Heart left ventricle (tissue), 16 donors: ENCODE measurements at regions of chr6 and their contacts with region 1.

Region 1: GRCh38 chr6:79777713-79778579 is 146.8 kb downstream of the SH3BGRL2 start:
- DNase-seq: peak; percentile 69 to 87 (median 74)
- ATAC-seq: peak; percentile 78 to 94 (median 92)
- H3K4me3 ChIP-seq: peak overlapping the region in 11 of 12 donors; percentile 0 to 53 (median 37)
- H3K27ac ChIP-seq: peak overlapping the region in 1 of 12 donors; percentile 1
- H3K4me1 ChIP-seq: peaks cover 0 to 11% (median 0%) of the 10 kb centered on the region in 12 donors
- H3K27me3 ChIP-seq: no peaks in the 10 kb centered on the region
- CTCF ChIP-seq: peak; percentile 95 to 100 (median 98)
- POLR2A ChIP-seq: no peak

Region 2: DNA sequence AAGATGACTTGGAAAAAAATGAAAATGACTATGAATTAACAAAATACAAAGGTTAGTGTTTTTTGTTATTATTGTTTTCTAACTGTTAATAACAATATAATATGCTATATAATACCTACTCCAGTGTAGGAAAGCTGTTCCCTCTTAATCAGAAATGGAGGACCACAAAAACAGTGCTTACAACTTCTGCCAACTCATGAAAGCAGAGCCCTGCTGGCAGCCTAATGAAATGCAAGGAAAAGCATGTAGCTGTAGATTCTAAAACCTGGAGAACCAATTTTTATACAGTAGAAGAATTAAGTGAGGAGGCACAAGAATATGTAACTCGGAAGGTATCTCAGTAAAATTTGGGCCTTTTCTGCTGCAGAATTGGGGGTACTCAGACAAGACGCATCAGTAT is 729.3 kb before region 1 on chr6:
- intact Hi-C with region 1: no loop called
- DNase-seq: no peak
- ATAC-seq: no peak
- H3K4me3 ChIP-seq: no peak overlapping the region
- H3K27ac ChIP-seq: no peak overlapping the region
- H3K4me1 ChIP-seq: peaks cover 0 to 2% (median 0%) of the 10 kb centered on the region in 12 donors
- H3K27me3 ChIP-seq: no peaks in the 10 kb centered on the region
- CTCF ChIP-seq: peak in 6 of 12 donors; percentile 11 to 40 (median 24)
- POLR2A ChIP-seq: no peak

Region 3: DNA sequence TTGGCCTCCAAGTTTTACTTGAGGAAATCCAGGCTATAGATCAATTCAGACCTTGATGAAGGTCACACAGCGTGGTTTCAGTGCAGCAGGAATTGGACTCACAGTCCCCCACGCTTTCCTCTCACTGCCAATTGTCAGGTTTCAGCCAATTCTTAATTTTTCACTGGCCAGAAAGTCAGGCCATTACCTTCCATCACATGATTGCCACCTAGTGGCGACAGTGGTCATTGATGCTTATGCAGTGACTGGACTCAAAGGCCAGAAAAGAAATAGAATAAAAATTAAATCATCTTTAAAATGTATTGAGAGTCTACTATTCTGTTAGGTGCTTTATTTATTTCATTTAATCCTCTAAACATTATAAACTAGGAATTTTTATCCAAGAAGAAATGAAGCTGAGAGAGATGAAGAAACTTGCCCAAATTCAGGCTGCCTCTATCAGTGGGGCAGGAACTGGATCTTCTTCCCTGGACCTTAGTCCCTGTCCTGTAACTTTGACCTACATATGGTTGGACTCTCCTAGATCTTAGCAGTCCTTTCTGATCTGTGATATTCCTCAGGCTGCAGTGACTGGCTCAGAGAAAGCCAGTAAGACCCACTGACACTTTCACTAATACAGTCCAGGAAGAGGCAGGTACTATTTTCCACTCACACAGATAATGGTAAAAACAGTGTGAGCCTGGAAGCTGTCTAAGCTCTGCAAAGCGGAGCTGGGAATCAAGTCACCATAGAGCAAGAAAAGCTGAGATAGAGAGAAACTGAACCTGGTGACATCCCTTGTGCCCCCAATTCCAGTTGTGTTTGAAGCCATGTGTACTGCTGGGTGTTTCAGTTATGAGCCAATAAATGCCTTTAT is 36.1 kb after region 1 on chr6:
- intact Hi-C with region 1: loop called in 5 of 10 experiments (anchors 2 to 5 kb)
- DNase-seq: peak; percentile 51 to 73 (median 56)
- ATAC-seq: peak in 3 of 4 donors; percentile 54 to 72 (median 59)
- H3K4me3 ChIP-seq: no peak overlapping the region
- H3K27ac ChIP-seq: no peak overlapping the region
- H3K4me1 ChIP-seq: no peaks in the 10 kb centered on the region
- H3K27me3 ChIP-seq: no peaks in the 10 kb centered on the region
- CTCF ChIP-seq: peak; percentile 71 to 91 (median 86)
- POLR2A ChIP-seq: no peak

Region 4: DNA sequence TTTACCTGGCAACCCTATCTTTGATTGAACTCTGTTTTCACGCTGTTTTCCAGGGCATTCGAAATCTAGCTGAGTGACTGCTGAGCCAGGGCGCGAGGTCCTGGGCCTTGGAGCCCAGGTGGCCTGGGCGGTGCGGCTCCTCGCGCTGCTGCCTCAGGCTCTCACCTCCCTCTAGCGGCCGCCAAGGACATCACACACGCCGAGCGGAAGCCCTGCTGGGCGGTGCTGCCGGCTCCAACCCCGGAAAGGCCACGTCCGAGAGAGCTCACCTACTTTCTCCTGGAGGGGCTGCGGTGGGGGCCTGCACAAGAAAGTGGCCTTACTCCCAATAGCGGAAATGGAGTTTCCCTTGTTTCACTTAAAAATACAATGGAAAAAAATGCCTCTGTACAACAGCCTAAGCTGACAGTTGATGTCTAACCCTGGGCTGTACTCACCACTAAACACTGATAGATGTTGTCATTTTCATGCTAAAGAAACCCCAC is 91.7 kb after region 1 on chr6:
- intact Hi-C with region 1: loop called in 9 of 10 experiments (anchors 2 to 10 kb)
- DNase-seq: peak; percentile 64 to 89 (median 79)
- ATAC-seq: peak; percentile 97 to 100 (median 98)
- H3K4me3 ChIP-seq: peak overlapping the region in 7 of 12 donors; percentile 5 to 45 (median 31)
- H3K27ac ChIP-seq: no peak overlapping the region
- H3K4me1 ChIP-seq: peaks cover 0 to 15% (median 0%) of the 10 kb centered on the region in 12 donors
- H3K27me3 ChIP-seq: peaks cover 0 to 4% (median 0%) of the 10 kb centered on the region in 9 donors
- CTCF ChIP-seq: peak; percentile 80 to 95 (median 89)
- POLR2A ChIP-seq: no peak

Region 5: GRCh38 chr6:80094017-80094416 is 316.1 kb after region 1 on chr6:
- intact Hi-C with region 1: loop called in 8 of 10 experiments (anchors 2 to 10 kb)
- DNase-seq: no peak
- ATAC-seq: no peak
- H3K4me3 ChIP-seq: no peak overlapping the region
- H3K27ac ChIP-seq: no peak overlapping the region
- H3K4me1 ChIP-seq: no peaks in the 10 kb centered on the region
- H3K27me3 ChIP-seq: no peaks in the 10 kb centered on the region
- CTCF ChIP-seq: peak in 11 of 12 donors; percentile 33 to 63 (median 43)
- POLR2A ChIP-seq: no peak